Activated CD8-positive, alpha-beta memory T cell treated with anti-CD3 and anti-CD28 coated beads, Interleukin-2, amount 10 ng/mL, durations not matched to agents 7 days and 5 days (primary cell): ENCODE measurements at regions of chr21 and their contacts with region 1.

Region 1: DNA sequence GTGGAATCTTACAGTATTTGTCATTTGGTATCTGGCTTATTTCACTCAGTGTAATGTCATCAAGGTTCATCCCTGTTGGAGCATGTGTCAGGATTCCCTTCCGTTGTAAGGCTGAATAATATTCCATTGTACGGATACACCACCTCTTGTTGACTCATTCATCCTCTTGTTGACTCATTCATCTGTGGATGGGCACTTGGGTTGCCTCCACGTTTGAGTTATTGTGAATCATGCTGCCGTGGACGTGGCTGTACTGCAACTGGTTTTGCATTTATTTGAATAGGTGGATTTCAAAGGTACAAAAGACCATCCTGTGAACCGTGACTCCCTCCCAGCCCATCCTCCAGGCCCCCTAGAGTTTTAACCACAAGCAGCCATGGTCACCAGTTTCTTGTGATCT is 11.9 kb upstream of the TCP10L start:
- DNase-seq: no peak
- ATAC-seq: no peak
- H3K4me3 Mint-ChIP-seq: no peak overlapping the region
- H3K27ac Mint-ChIP-seq: no peak overlapping the region
- H3K4me1 Mint-ChIP-seq: peaks cover 19% of the 10 kb centered on the region
- H3K27me3 Mint-ChIP-seq: no peaks in the 10 kb centered on the region

Region 2: GRCh38 chr21:32403201-32403777 is 193.9 kb before region 1 on chr21:
- CTCF ChIA-PET with region 1: interaction called, 75 read pairs
- DNase-seq: peak; percentile 71
- ATAC-seq: peak; percentile 83
- H3K4me3 Mint-ChIP-seq: no peak overlapping the region
- H3K27ac Mint-ChIP-seq: peak overlapping the region; percentile 16
- H3K4me1 Mint-ChIP-seq: peaks cover 26% of the 10 kb centered on the region
- H3K27me3 Mint-ChIP-seq: peaks cover 6% of the 10 kb centered on the region

Region 3: DNA sequence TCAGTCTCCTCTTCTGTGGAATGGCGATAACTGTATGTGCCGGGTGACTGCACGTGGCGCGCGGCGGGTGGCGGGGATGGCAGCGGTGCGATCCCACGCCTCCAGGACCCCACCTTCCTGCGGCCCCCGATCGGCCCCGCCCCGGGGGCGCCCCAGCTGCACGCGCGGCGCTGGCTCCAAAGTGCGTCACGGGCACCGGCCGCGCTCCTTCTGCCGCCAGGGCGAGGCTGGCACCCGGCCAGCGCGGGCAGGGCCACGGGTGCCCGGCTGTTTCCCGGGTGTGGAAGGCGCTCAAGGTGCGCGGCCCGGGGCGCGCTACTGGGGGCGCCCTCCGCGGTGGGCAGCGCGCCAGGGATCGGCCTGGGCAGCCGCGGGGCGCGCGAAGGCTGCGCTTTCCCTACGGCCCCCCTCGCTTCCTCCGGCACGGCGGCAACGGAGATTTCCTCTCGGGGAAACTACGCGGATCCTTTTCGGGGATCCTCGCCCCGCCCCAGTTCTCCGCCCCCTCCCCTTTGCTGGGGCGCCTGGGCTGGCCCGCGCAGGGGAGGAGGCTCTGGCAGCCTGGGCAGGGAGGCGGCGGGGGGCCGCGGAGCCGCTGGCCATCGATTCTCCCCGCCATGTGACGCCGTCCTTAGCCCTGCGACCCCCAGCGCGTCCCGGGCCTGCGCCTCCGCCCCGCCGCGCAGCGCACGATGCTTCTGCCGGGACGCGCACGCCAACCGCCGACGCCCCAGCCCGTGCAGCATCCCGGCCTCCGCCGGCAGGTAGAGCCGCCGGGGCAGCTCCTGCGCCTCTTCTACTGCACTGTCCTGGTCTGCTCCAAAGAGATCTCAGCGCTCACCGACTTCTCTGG is 184.8 kb before region 1 on chr21 and contains the start of gene EVA1C:
- CTCF ChIA-PET with region 1: interaction called, 17 read pairs
- DNase-seq: peak; percentile 59
- ATAC-seq: peak; percentile 63
- H3K4me3 Mint-ChIP-seq: peak within 1 kb of the TSS; percentile 90
- H3K27ac Mint-ChIP-seq: peak within 1 kb of the TSS; percentile 91
- H3K4me1 Mint-ChIP-seq: peaks cover 46% of the 10 kb centered on the region
- H3K27me3 Mint-ChIP-seq: no peaks in the 10 kb centered on the region
- total RNA-seq, gene EVA1C: 4.5 to 7.6 TPM

Region 4: DNA sequence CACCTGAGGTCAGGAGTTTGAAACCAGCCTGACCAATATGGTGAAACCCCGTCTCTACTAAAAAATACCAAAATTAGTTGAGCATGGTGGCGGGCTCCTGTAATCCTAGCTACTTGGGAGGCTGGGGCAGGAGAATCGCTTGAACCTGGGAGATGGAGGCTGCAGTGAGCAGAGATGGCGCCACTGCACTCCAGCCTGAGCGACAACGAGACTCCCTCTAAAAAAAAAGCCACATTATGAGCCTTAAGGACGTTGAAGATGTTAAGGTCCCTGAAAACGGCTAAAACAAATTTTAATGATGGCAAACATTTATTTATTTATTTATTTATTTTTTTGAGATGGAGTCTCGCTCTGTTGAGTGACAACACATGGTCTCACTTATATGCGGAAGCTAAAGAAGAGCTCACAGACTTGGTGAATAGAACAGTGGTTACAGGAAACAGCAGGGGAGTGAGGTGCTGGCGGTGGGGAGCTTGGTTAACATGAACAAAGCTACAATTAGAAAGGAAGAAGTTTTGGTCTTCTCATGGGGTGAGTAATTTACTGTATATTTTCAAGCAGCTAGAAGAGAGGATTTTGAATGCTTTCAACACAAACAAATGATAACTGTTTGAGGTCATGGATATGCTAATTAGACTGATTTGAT is 58.9 kb before region 1 on chr21:
- CTCF ChIA-PET with region 1: interaction called, 13 read pairs
- DNase-seq: peak; percentile 84
- ATAC-seq: peak; percentile 95
- H3K4me3 Mint-ChIP-seq: peak overlapping the region; percentile 29
- H3K27ac Mint-ChIP-seq: peak overlapping the region; percentile 78
- H3K4me1 Mint-ChIP-seq: peaks cover 24% of the 10 kb centered on the region
- H3K27me3 Mint-ChIP-seq: no peaks in the 10 kb centered on the region

Region 5: GRCh38 chr21:32569261-32570230 is 27.7 kb before region 1 on chr21:
- CTCF ChIA-PET with region 1: interaction called, 17 read pairs
- DNase-seq: peak; percentile 90
- ATAC-seq: peak; percentile 94
- H3K4me3 Mint-ChIP-seq: peak overlapping the region; percentile 85
- H3K27ac Mint-ChIP-seq: peak overlapping the region; percentile 86
- H3K4me1 Mint-ChIP-seq: peaks cover 22% of the 10 kb centered on the region
- H3K27me3 Mint-ChIP-seq: peaks cover 2% of the 10 kb centered on the region

Region 6: DNA sequence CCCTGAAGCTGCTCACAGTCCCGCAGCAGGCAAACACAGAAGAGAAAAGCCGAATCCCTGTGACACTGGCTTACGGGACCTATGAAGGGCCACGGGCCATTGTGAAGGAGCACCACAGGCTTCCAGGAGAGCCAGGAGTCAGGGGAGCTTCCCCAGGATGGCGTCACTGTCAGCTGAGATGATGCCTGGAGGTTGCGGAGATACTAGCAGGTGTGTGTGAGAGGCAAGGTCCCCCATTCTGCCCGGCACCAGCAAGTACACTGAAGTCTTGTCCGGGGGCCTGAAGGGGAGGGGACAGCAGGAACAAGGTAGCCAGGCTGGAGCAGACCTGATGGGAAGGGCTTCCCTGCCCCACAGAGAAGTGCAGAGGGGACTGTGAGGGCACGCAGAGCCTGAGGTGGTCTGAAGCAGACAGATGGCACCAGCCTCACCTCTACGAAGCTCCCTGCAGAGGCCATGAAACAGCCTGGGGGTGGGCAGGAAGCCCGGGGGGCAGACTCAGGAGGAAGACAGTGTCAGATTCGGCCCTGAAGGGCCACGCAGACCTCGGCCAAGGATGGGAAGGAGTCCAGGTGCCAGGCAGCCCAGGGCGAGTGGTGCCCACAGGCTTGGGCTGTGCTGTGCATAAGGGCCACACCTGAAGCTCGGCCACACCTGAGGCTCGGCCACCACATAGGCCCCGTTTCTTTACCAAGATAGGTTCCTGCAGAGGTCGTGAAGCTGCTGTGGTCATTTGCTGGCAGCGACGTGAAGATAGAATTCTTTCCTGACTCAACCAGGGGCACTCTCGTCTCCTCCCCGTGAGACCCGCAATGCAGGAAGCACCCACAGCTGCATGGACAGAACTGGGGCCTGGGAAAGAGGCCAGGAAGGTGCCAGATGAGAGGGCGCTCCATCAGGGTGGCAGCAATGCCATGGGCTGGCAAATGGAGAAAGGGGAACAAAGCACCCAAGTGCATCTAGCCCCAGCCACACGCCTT is 22.0 kb before region 1 on chr21:
- CTCF ChIA-PET with region 1: interaction called, 17 read pairs
- DNase-seq: no peak
- ATAC-seq: no peak
- H3K4me3 Mint-ChIP-seq: no peak overlapping the region
- H3K27ac Mint-ChIP-seq: no peak overlapping the region
- H3K4me1 Mint-ChIP-seq: peaks cover 21% of the 10 kb centered on the region
- H3K27me3 Mint-ChIP-seq: peaks cover 15% of the 10 kb centered on the region

Region 7: GRCh38 chr21:32612075-32612998 is 15.1 kb after region 1 on chr21 and contains the start of gene CFAP298:
- CTCF ChIA-PET with region 1: interaction called, 34 read pairs
- DNase-seq: peak; percentile 94
- ATAC-seq: peak; percentile 91
- H3K4me3 Mint-ChIP-seq: peak within 1 kb of the TSS; percentile 98
- H3K27ac Mint-ChIP-seq: peak within 1 kb of the TSS; percentile 90
- H3K4me1 Mint-ChIP-seq: peaks cover 19% of the 10 kb centered on the region
- H3K27me3 Mint-ChIP-seq: peaks cover 9% of the 10 kb centered on the region
- total RNA-seq, gene CFAP298: 40.1 to 40.4 TPM

Region 8: DNA sequence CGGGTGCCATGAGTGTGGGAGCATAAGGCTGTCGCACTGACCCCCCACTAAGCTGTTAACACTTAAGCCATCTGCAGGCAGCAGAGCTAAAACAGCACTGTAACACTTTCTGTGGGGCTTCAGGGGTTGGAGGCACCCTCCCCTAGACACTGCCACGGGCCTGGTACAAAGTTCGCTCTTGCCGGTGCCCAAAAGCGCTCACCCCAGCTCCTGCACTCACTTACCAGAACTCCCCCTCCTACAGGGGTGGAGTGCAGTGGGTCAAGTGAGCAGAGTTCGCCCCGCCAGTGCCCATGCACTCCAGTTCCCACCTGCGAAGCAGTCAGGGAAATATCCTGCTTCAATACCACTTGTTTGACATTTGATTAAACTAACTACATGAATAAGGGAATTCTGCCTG is 61.3 kb after region 1 on chr21:
- CTCF ChIA-PET with region 1: no interaction called
- DNase-seq: no peak
- ATAC-seq: no peak
- H3K4me3 Mint-ChIP-seq: no peak overlapping the region
- H3K27ac Mint-ChIP-seq: no peak overlapping the region
- H3K4me1 Mint-ChIP-seq: no peaks in the 10 kb centered on the region
- H3K27me3 Mint-ChIP-seq: no peaks in the 10 kb centered on the region